ENCODE measurements at regions of chr20 and their contacts with region 1.

Region 1: GRCh38 chr20:47663333-47664067 is 121.8 kb downstream of the SULF2 start:
- DNase-seq: peak; percentile 81
- H3K4me3 Mint-ChIP-seq: no peak overlapping the region
- H3K27ac Mint-ChIP-seq: peak overlapping the region; percentile 46
- H3K4me1 Mint-ChIP-seq: peaks cover 14% of the 10 kb centered on the region
- H3K27me3 Mint-ChIP-seq: no peaks in the 10 kb centered on the region
- CTCF ChIP-seq: peak; percentile 90

Region 2: GRCh38 chr20:47196091-47197081 is 467.1 kb before region 1 on chr20:
- CTCF ChIA-PET with region 1: no interaction called
- POLR2A ChIA-PET with region 1: no interaction called
- intact Hi-C with region 1: loop called (anchors 1 kb)
- DNase-seq: peak; percentile 70
- H3K4me3 Mint-ChIP-seq: no peak overlapping the region
- H3K27ac Mint-ChIP-seq: no peak overlapping the region
- H3K4me1 Mint-ChIP-seq: peaks cover 5% of the 10 kb centered on the region
- H3K27me3 Mint-ChIP-seq: no peaks in the 10 kb centered on the region
- CTCF ChIP-seq: peak; percentile 93

Region 3: GRCh38 chr20:47648943-47649342 is 14.6 kb before region 1 on chr20:
- CTCF ChIA-PET with region 1: interaction called, 29 read pairs
- POLR2A ChIA-PET with region 1: interaction called, 9 read pairs
- intact Hi-C with region 1: no loop called
- DNase-seq: no peak
- H3K4me3 Mint-ChIP-seq: no peak overlapping the region
- H3K27ac Mint-ChIP-seq: no peak overlapping the region
- H3K4me1 Mint-ChIP-seq: no peaks in the 10 kb centered on the region
- H3K27me3 Mint-ChIP-seq: no peaks in the 10 kb centered on the region
- CTCF ChIP-seq: no peak

Region 4: DNA sequence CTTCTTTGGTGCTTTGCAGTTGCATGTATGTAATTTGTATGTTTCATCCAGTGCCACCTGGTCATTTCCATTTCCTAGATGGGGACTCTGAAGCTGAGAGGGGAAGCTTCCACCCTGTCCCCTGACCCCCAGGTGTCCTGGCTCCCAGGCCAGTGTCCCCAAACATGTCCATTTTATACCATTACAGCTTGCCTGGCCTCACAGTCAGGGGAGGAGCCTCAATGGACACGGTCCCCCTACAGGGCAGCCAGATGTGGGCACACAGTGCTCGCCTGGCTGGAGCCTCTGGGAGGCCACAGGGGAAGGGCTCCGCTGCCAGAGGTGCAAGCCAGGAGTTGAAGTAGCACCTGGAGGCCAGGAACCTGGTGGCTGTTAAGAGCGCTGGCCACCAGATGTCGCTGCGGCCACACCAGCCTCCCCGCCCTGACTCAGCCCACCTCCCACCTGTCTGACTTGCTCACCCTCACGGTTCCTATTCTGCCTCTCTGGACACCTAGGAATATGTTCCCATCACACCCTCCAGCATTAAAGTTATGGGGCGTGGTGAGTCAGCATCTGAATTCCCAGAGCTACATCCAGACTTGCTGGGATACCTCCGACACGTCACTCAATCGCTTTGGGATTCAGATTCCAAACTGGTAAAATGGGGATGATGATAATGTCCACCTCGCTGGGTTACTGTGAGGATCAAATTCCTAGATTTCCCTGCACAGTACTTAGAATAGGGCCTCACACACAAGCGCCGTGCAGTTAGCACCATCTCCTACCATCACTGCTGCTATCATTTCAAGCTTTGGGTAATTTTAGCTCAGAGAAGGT is 14.3 kb after region 1 on chr20:
- CTCF ChIA-PET with region 1: interaction called, 34 read pairs
- POLR2A ChIA-PET with region 1: no interaction called
- intact Hi-C with region 1: no loop called
- DNase-seq: peak; percentile 60
- H3K4me3 Mint-ChIP-seq: no peak overlapping the region
- H3K27ac Mint-ChIP-seq: no peak overlapping the region
- H3K4me1 Mint-ChIP-seq: no peaks in the 10 kb centered on the region
- H3K27me3 Mint-ChIP-seq: no peaks in the 10 kb centered on the region
- CTCF ChIP-seq: peak; percentile 95

Region 5: DNA sequence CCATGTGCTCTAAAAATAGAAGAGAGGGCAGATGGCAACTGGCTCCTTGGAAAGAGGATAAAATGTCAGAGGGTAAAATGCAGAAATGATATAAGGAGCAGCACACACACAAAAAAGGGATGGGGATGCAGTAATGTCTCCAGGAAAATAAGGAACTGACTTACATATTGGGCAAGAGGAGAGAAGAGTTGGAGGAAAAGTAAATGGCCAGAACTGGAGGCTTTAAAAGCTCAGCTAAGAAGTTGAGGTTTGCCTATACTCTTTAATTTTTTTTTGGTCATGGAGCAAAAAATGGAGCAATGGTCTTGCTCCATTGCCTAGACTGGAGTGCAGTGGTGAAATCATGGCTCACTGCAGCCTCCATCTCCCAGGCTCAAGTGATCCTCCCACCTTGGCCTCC is 28.1 kb after region 1 on chr20:
- CTCF ChIA-PET with region 1: interaction called, 12 read pairs
- POLR2A ChIA-PET with region 1: no interaction called
- intact Hi-C with region 1: no loop called
- DNase-seq: no peak
- H3K4me3 Mint-ChIP-seq: no peak overlapping the region
- H3K27ac Mint-ChIP-seq: peak overlapping the region; percentile 76
- H3K4me1 Mint-ChIP-seq: no peaks in the 10 kb centered on the region
- H3K27me3 Mint-ChIP-seq: no peaks in the 10 kb centered on the region
- CTCF ChIP-seq: no peak

Region 6: GRCh38 chr20:47708140-47708807 is 44.8 kb after region 1 on chr20:
- CTCF ChIA-PET with region 1: no interaction called
- POLR2A ChIA-PET with region 1: no interaction called
- intact Hi-C with region 1: no loop called
- DNase-seq: no peak
- H3K4me3 Mint-ChIP-seq: no peak overlapping the region
- H3K27ac Mint-ChIP-seq: no peak overlapping the region
- H3K4me1 Mint-ChIP-seq: peaks cover 26% of the 10 kb centered on the region
- H3K27me3 Mint-ChIP-seq: no peaks in the 10 kb centered on the region
- CTCF ChIP-seq: no peak

Region 7: GRCh38 chr20:47914792-47915191 is 251.3 kb after region 1 on chr20:
- CTCF ChIA-PET with region 1: no interaction called
- POLR2A ChIA-PET with region 1: no interaction called
- intact Hi-C with region 1: no loop called
- DNase-seq: no peak
- H3K4me3 Mint-ChIP-seq: no peak overlapping the region
- H3K27ac Mint-ChIP-seq: no peak overlapping the region
- H3K4me1 Mint-ChIP-seq: peaks cover 41% of the 10 kb centered on the region
- H3K27me3 Mint-ChIP-seq: no peaks in the 10 kb centered on the region
- CTCF ChIP-seq: no peak

Region 8: DNA sequence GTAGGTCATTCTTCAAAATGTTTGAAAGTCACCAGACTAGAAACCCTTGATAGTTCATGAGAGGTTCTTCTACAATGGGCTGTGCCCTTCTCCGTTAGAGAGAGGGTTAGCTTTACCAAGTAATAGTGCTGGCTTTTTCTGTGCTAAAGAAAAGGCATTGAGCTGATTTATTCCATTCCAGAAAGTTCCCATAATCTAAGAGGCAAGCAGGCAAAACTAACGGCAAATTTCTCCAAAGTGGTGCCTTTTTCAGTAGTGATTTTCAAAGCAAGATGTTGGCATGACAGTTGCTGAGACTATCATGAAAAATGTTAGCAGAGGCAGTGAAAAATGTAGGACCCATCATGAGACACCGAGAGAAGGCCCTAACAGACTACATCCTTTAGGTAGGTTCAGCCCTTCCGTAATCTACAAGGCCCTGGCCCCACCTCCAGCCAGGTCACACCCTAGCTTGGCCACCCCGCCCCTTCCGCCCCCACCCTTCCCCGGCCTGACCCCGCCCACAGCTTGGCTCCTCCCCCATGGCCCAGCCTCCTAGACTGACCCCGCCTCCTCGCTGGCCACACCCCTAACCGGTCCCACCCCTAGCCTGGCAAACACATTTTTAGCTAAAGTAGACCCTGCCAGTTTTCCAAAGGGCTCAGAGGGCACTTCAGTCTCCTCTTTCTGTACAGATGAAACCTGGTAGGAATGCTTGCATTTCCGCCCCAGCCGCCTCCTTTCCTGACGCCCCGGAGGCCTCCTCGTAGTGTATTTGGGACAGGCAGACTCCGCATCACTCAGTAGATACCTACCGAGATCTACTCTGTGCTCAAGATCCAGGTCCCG is 720.6 kb after region 1 on chr20:
- CTCF ChIA-PET with region 1: no interaction called
- POLR2A ChIA-PET with region 1: no interaction called
- intact Hi-C with region 1: no loop called
- DNase-seq: peak; percentile 8
- H3K4me3 Mint-ChIP-seq: no peak overlapping the region
- H3K27ac Mint-ChIP-seq: no peak overlapping the region
- H3K4me1 Mint-ChIP-seq: no peaks in the 10 kb centered on the region
- H3K27me3 Mint-ChIP-seq: peaks cover 64% of the 10 kb centered on the region
- CTCF ChIP-seq: no peak